ENCODE measurements at regions of chr15 and their contacts with region 1.

Region 1: GRCh38 chr15:52735231-52736089 is 54.7 kb downstream of the ONECUT1 start:
- DNase-seq: peak; percentile 73 to 81 (median 78)
- ATAC-seq: peak; percentile 99
- H3K4me3 ChIP-seq: no peak overlapping the region
- H3K27ac ChIP-seq: no peak overlapping the region
- H3K4me1 ChIP-seq: no peaks in the 10 kb centered on the region
- H3K27me3 ChIP-seq: peaks cover 0 to 4% of the 10 kb centered on the region in 2 experiments; a peak in 1 of 5 replicates
- CTCF ChIP-seq: peak; percentile 69 to 93 (median 76)
- EP300 ChIP-seq: no peak
- POLR2A ChIP-seq: no peak
- RAD21 ChIP-seq: peak; percentile 90 to 92

Region 2: DNA sequence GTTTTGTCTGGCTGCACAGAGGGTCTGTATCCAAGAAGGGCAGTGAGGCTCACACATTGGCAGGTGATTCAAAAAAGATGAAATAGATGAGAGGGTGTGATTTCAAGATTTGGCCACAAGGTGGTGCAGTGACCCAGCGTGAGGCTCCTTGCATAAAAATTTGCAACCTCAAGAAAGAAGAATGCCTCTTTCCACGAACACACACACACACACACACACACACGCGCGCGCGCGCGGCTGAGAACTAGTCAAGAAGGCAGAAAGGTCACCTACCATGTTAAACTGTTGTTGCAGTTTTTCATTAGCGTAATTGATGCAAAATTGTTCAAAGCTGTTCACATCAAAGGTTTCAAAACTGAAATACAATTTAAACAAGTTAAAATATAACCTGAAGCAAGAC is 479.1 kb before region 1 on chr15:
- CTCF ChIA-PET with region 1: interaction called, 21 read pairs
- POLR2A ChIA-PET with region 1: interaction called, 3 read pairs
- in situ Hi-C with region 1: no loop called
- intact Hi-C with region 1: loop called (anchors 1 kb)
- DNase-seq: peak; percentile 66 to 76 (median 68)
- ATAC-seq: peak; percentile 75
- H3K4me3 ChIP-seq: no peak overlapping the region
- H3K27ac ChIP-seq: no peak overlapping the region
- H3K4me1 ChIP-seq: no peaks in the 10 kb centered on the region; a peak in 1 of 5 replicates
- H3K27me3 ChIP-seq: peaks cover 13 to 36% of the 10 kb centered on the region in 2 experiments; a peak in 4 of 5 replicates
- CTCF ChIP-seq: peak; percentile 64 to 88 (median 74)
- EP300 ChIP-seq: no peak
- POLR2A ChIP-seq: no peak
- RAD21 ChIP-seq: peak; percentile 74 to 87

Region 3: GRCh38 chr15:52331490-52332240 is 403.8 kb before region 1 on chr15:
- CTCF ChIA-PET with region 1: interaction called, 3 read pairs
- POLR2A ChIA-PET with region 1: interaction called, 5 read pairs
- in situ Hi-C with region 1: no loop called
- intact Hi-C with region 1: loop called (anchors 1 kb)
- DNase-seq: peak in 2 of 4 experiments; percentile 14 to 29
- ATAC-seq: peak; percentile 62; the same call in 2 of the 3 replicates
- H3K4me3 ChIP-seq: no peak overlapping the region
- H3K27ac ChIP-seq: no peak overlapping the region
- H3K4me1 ChIP-seq: no peaks in the 10 kb centered on the region
- H3K27me3 ChIP-seq: no peaks in the 10 kb centered on the region
- CTCF ChIP-seq: peak; percentile 29 to 56 (median 36); a peak in 3 of 6 replicates
- EP300 ChIP-seq: no peak
- POLR2A ChIP-seq: no peak
- RAD21 ChIP-seq: peak; percentile 73 to 80

Region 4: DNA sequence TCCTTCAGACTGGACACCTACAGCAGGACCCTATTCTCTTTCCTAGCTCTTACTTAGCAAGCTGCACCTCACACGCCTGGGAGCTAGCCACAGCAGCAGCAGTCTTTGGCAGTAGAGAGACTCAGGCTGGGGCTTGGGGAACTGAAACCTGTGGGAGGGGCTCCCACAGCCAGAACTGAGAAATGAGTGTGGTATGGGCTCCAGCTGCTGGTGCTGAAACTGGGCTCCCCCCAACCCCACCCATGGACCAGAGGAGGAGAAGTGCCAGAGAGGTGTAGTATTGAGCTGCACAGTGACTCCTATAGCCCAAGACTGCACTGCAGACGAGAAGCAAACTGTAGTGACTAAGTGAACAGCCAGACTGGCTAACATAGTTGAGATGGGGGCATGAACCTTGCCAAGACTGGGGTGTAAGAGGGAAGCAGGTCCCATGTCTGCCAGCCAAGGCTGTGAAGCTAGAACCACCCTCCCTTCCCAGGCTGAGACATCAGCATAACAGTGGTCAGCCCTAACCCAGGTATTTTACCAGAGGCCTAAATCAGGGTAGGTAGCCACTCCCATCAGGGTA is 269.2 kb before region 1 on chr15:
- CTCF ChIA-PET with region 1: no interaction called
- POLR2A ChIA-PET with region 1: no interaction called
- in situ Hi-C with region 1: no loop called
- intact Hi-C with region 1: loop called (anchors 10 kb)
- DNase-seq: no peak
- ATAC-seq: no peak
- H3K4me3 ChIP-seq: no peak overlapping the region
- H3K27ac ChIP-seq: no peak overlapping the region
- H3K4me1 ChIP-seq: no peaks in the 10 kb centered on the region
- H3K27me3 ChIP-seq: peaks cover 0 to 22% of the 10 kb centered on the region in 2 experiments; a peak in 3 of 5 replicates
- CTCF ChIP-seq: no peak
- EP300 ChIP-seq: no peak
- POLR2A ChIP-seq: no peak
- RAD21 ChIP-seq: no peak

Region 5: DNA sequence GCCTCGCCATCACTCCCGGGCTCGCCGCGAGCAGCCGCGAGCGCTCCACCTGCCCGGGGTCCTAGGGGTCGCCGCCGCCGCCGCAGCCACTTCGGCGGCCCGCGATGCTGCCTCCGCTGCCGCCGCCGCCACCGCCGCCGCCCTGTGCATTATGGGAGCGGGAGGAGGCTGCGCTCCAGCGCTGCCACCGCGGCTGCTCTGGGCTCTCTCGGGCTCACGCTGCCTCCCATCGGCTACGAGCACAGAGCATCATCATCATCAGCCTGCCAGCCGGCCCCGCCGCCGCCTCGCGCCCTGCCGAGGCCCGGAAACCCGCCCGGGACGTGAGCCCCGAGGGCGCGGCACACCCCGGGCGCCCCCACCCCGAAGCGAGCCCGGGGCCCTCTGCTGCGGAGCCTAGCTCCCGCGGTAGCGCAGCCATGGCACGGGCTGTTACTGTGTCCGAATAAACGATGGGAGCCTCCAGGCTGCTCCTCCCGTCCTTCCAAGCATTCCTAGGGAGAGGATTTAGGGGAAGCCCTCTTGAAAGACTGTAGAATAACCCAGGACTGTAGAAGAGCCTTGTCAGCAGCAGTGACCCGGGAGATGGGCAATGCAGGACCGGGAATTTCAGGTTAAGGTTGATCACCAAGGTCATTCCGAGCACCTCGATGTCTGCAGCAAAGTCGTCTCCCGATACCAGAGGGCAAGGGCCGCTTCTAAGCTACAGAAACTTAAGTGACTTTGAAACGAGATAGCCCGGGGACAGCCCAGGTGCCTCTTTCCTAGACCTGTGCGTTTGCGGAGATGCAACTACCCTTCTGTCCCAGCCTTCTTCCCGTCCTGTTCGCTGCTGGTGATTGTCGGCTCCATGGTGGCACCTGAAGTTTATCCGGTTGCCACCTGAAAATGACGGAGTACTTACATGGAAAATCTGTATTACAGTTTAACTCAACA is 206.2 kb before region 1 on chr15:
- CTCF ChIA-PET with region 1: interaction called, 9 read pairs
- POLR2A ChIA-PET with region 1: no interaction called
- in situ Hi-C with region 1: no loop called
- intact Hi-C with region 1: loop called (anchors 10 kb)
- DNase-seq: peak in 1 of 4 experiments; percentile 47
- ATAC-seq: peak; percentile 77
- H3K4me3 ChIP-seq: peak overlapping the region; percentile 65
- H3K27ac ChIP-seq: no peak overlapping the region
- H3K4me1 ChIP-seq: peaks cover 0 to 14% of the 10 kb centered on the region in 2 experiments; a peak in 3 of 5 replicates
- H3K27me3 ChIP-seq: peaks cover 26 to 39% of the 10 kb centered on the region in 2 experiments
- CTCF ChIP-seq: no peak
- EP300 ChIP-seq: no peak
- POLR2A ChIP-seq: no peak
- RAD21 ChIP-seq: no peak

Region 6: DNA sequence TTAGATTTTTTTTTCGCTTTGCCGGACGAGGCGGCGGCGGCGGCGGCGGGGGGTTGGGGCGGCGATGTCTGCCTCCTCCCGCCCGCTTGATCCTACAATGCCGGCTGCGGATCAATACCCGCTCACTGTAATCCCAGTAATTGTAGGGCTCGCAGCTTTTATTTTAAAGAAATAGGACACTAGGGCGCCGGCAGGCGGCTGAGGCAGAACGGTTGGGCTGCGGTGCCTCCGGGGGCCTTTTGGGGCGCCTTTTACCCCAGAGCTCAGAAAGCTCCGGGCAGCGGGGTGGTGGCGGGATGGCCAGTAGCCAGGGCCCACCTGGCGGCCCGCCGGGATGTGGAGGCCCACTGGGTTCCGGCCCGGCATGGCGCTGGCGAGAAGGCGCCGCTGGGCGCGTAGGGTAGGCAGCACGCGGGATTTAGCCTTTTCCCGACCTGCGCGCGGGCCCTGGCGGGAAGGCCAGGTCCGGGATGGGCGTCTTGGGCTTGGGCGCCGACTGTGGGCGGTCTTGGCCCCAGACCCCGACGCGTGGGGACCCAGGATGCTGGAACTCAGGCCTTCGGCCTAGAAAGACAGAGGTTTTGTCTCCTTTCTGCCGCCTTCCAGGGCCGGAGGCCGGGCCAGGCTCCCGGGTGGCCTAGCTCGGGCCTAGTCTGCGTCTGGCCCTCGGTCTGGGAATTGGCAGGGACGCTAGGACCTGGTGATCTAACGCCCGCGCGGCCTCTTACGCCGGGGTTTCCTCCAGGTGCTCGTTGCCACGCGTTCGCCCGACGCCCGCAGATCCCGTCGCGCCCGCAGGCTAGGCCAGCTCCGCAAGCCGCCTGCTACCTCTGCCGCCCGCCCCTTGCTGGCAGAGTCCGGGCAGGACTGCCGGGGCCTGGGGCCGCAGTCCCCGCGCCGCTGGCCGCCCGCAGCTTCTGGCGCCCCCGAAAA is 70.2 kb after region 1 on chr15:
- CTCF ChIA-PET with region 1: no interaction called
- POLR2A ChIA-PET with region 1: no interaction called
- in situ Hi-C with region 1: no loop called
- intact Hi-C with region 1: no loop called
- DNase-seq: no peak
- ATAC-seq: peak; percentile 40; the same call in 2 of the 3 replicates
- H3K4me3 ChIP-seq: no peak overlapping the region
- H3K27ac ChIP-seq: no peak overlapping the region
- H3K4me1 ChIP-seq: peaks cover 0 to 17% of the 10 kb centered on the region in 2 experiments; a peak in 1 of 5 replicates
- H3K27me3 ChIP-seq: peaks cover 22 to 34% of the 10 kb centered on the region in 2 experiments; a peak in 3 of 5 replicates
- CTCF ChIP-seq: peak in 1 of 3 experiments; percentile 33; a peak in 2 of 6 replicates
- EP300 ChIP-seq: no peak
- POLR2A ChIP-seq: no peak
- RAD21 ChIP-seq: no peak